OCI-LY7 (cell line): ENCODE measurements at regions of chr1 and their contacts with region 1.

Region 1: GRCh38 chr1:29033829-29034466 is 89.8 kb downstream of the TMEM200B start:
- DNase-seq: peak; percentile 64
- H3K4me3 ChIP-seq: no peak overlapping the region
- H3K27ac ChIP-seq: no peak overlapping the region
- H3K4me1 ChIP-seq: no peaks in the 10 kb centered on the region
- CTCF ChIP-seq: peak; percentile 93

Region 2: GRCh38 chr1:28789412-28789811 is 244.5 kb before region 1 on chr1:
- CTCF ChIA-PET with region 1: no interaction called
- POLR2A ChIA-PET with region 1: no interaction called
- intact Hi-C with region 1: loop called (anchors 5 kb)
- DNase-seq: no peak
- H3K4me3 ChIP-seq: no peak overlapping the region
- H3K27ac ChIP-seq: no peak overlapping the region
- H3K4me1 ChIP-seq: peaks cover 5% of the 10 kb centered on the region
- CTCF ChIP-seq: no peak

Region 3: DNA sequence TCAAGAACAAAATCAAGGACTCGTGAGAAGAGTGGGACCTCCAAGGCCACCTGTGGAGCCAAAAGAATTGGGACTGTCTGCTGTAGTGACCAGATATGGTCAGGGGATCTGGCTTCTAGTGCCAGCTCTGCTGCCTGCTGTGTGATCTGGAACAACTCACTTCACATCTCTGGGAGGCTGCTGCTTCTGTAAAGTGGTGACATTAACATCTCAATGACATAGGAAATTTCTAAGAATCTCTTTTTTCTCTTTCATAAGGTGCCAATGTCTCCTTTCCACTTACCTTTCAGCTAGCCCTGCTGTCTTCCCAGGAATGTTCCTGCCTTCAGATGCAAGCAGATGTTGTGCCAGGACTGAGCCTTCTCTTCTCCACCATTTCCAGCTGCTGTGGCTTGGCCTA is 152.8 kb after region 1 on chr1:
- CTCF ChIA-PET with region 1: no interaction called
- POLR2A ChIA-PET with region 1: no interaction called
- intact Hi-C with region 1: no loop called
- DNase-seq: no peak
- H3K4me3 ChIP-seq: no peak overlapping the region
- H3K27ac ChIP-seq: no peak overlapping the region
- H3K4me1 ChIP-seq: peaks cover 11% of the 10 kb centered on the region
- CTCF ChIP-seq: no peak